ENCODE measurements at regions of chr2 and their contacts with region 1.

Region 1: DNA sequence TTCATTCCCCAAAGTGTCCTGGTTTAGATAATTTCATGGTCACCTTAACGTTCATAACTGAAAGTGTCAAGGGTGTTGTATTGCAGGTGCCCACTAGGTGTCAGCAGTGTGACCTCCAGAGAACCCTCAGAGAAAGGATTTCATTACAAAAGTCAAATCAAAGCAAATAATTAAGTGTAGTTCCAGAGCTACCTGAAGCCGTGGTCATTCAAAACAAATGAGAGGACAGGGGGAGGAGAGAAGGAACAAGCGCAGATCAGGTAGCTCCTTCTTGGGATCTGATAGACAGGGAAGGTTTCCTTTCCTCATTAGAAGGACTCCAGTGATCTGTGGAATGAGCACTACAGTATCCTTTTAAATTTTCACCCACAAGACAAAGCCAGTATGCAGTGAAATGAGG is at the start of gene SLC9A4:
- DNase-seq: peak; percentile 80
- ATAC-seq: peak; percentile 75
- H3K4me3 Mint-ChIP-seq: no peak within 1 kb of the TSS
- H3K27ac Mint-ChIP-seq: no peak within 1 kb of the TSS
- H3K4me1 Mint-ChIP-seq: no peaks in the 10 kb centered on the region
- H3K27me3 Mint-ChIP-seq: peaks cover 15% of the 10 kb centered on the region
- CTCF ChIP-seq: peak; percentile 74
- total RNA-seq, gene SLC9A4: 0.07 TPM in 1 of 2 experiments, not detected in the other

Region 2: GRCh38 chr2:102460467-102460866 is 12.6 kb before region 1 on chr2:
- CTCF ChIA-PET with region 1: interaction called, 56 read pairs
- POLR2A ChIA-PET with region 1: interaction called, 3 read pairs
- intact Hi-C with region 1: no loop called
- DNase-seq: no peak
- ATAC-seq: no peak
- H3K4me3 Mint-ChIP-seq: no peak overlapping the region
- H3K27ac Mint-ChIP-seq: no peak overlapping the region
- H3K4me1 Mint-ChIP-seq: no peaks in the 10 kb centered on the region
- H3K27me3 Mint-ChIP-seq: peaks cover 7% of the 10 kb centered on the region
- CTCF ChIP-seq: no peak

Region 3: GRCh38 chr2:102520028-102520427 is 47.0 kb after region 1 on chr2:
- CTCF ChIA-PET with region 1: interaction called, 10 read pairs
- POLR2A ChIA-PET with region 1: no interaction called
- intact Hi-C with region 1: no loop called
- DNase-seq: peak; percentile 43
- ATAC-seq: peak; percentile 65
- H3K4me3 Mint-ChIP-seq: no peak overlapping the region
- H3K27ac Mint-ChIP-seq: no peak overlapping the region
- H3K4me1 Mint-ChIP-seq: no peaks in the 10 kb centered on the region
- H3K27me3 Mint-ChIP-seq: no peaks in the 10 kb centered on the region
- CTCF ChIP-seq: peak; percentile 74

Region 4: GRCh38 chr2:102606363-102606762 is 133.3 kb after region 1 on chr2:
- CTCF ChIA-PET with region 1: interaction called, 99 read pairs
- POLR2A ChIA-PET with region 1: interaction called, 3 read pairs
- intact Hi-C with region 1: no loop called
- DNase-seq: no peak
- ATAC-seq: no peak
- H3K4me3 Mint-ChIP-seq: no peak overlapping the region
- H3K27ac Mint-ChIP-seq: no peak overlapping the region
- H3K4me1 Mint-ChIP-seq: no peaks in the 10 kb centered on the region
- H3K27me3 Mint-ChIP-seq: peaks cover 11% of the 10 kb centered on the region
- CTCF ChIP-seq: no peak

Region 5: DNA sequence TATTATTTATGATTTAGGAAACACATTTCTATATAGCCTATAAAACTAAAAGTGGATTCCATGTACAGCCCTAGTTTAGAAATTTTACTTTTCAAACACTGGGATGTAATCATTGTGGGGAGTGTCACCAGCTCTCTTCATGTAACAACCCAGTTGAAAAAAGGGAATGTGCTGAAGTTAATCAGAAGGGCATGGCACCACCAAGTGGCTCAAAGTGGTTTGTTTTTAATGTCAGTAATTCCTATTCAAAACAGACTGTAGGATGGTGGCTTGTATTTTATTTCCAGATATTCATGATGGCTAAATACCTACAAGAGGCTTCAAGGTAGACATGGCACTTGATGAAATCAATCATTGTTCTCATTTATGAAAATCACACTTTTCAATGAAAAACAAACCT is 230.7 kb after region 1 on chr2:
- CTCF ChIA-PET with region 1: interaction called, 7 read pairs
- POLR2A ChIA-PET with region 1: no interaction called
- intact Hi-C with region 1: loop called (anchors 10 kb)
- DNase-seq: peak; percentile 43
- ATAC-seq: no peak
- H3K4me3 Mint-ChIP-seq: no peak overlapping the region
- H3K27ac Mint-ChIP-seq: no peak overlapping the region
- H3K4me1 Mint-ChIP-seq: no peaks in the 10 kb centered on the region
- H3K27me3 Mint-ChIP-seq: peaks cover 6% of the 10 kb centered on the region
- CTCF ChIP-seq: peak; percentile 32

Measured in activated CD8-positive, alpha-beta T cell treated with anti-CD3 and anti-CD28 coated beads for 36 hours (primary cell).